Activated CD8-positive, alpha-beta T cell treated with anti-CD3 and anti-CD28 coated beads for 36 hours (primary cell): ENCODE measurements at regions of chr19 and their contacts with region 1.

Region 1: GRCh38 chr19:11435058-11435832 is at the starts of genes ODAD3 and PRKCSH:
- DNase-seq: peak; percentile 99
- ATAC-seq: peak; percentile 95
- H3K4me3 Mint-ChIP-seq: peak within 1 kb of the TSS; percentile 100
- H3K27ac Mint-ChIP-seq: peak within 1 kb of the TSS; percentile 97
- H3K4me1 Mint-ChIP-seq: peaks cover 18% of the 10 kb centered on the region
- H3K27me3 Mint-ChIP-seq: no peaks in the 10 kb centered on the region
- CTCF ChIP-seq: peak; percentile 96
- total RNA-seq, gene ODAD3: 0.47 to 0.70 TPM
- total RNA-seq, gene PRKCSH: 207 to 211 TPM

Region 2: DNA sequence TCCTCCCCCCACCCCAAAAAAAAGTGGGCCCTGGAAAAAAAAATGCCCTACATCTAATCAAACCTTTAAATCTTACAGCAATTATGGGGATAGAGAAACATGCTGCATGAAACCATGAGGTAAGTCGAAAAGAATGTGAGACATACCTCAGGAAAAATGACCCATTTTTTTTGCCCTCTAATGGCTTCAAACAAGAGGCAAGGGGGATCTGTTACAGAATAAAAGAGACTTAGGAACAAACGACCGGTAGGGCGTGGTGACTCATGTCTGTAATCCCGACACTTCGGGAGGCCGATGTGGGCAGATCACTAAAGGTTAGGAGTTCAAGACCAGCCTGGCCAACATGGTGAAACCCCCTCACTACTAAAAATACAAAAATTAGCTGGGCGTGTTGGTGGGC is 24.6 kb before region 1 on chr19:
- CTCF ChIA-PET with region 1: no interaction called
- POLR2A ChIA-PET with region 1: no interaction called
- intact Hi-C with region 1: no loop called
- DNase-seq: no peak
- ATAC-seq: no peak
- H3K4me3 Mint-ChIP-seq: no peak overlapping the region
- H3K27ac Mint-ChIP-seq: no peak overlapping the region
- H3K4me1 Mint-ChIP-seq: no peaks in the 10 kb centered on the region
- H3K27me3 Mint-ChIP-seq: peaks cover 7% of the 10 kb centered on the region
- CTCF ChIP-seq: no peak

Region 3: DNA sequence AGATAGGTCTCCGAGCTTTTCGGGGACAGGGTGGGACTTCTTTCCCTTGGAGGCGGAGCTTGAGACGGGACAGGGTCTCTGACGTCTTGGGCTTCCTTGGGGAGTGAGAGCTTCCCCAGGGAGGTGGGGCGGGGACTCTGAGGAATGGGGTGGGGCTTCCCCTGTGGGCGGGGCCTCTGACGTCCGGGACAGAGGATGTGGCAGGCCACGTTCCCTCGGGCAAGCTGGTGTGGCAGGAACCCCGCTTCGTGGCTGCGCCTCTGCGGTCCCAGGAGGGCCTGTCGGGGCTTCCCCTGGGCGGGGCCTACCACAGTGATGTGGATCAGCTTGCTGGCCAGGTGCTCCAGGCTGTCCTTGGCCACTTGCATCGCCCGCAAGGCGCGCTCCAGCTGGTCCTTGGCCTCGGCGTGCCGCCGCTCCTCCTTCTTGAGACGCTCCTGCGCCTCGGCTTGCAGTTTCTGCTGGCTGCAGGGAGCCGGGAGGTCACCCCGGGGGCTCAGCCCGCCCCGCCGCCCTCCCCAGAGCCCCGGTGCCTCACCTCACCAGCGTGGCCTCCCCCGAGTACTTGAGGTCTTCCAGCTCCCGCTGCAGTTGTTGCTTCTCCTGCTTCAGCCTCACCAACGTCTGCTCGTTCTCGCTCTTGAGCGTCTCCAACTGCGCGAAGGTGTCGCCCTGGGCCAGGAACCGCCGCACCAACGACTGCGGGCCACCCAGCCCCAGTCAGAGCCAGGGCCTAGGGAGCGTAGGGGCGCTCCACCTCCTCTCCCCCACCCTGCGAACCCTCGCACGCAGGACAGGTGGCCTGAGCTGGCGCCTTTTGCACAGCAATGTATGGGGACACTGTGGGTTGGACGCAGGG is 12.9 kb before region 1 on chr19:
- CTCF ChIA-PET with region 1: interaction called, 11 read pairs
- POLR2A ChIA-PET with region 1: interaction called, 5 read pairs
- intact Hi-C with region 1: no loop called
- DNase-seq: peak; percentile 87
- ATAC-seq: peak; percentile 77
- H3K4me3 Mint-ChIP-seq: peak overlapping the region; percentile 65
- H3K27ac Mint-ChIP-seq: no peak overlapping the region
- H3K4me1 Mint-ChIP-seq: peaks cover 31% of the 10 kb centered on the region
- H3K27me3 Mint-ChIP-seq: peaks cover 54% of the 10 kb centered on the region
- CTCF ChIP-seq: no peak